ENCODE measurements at regions of chr1 and their contacts with region 1.

Region 1: GRCh38 chr1:30801771-30802198 is 44.2 kb upstream of the LAPTM5 start:
- DNase-seq: peak; percentile 83
- ATAC-seq: peak; percentile 74
- H3K4me3 Mint-ChIP-seq: no peak overlapping the region
- H3K27ac Mint-ChIP-seq: no peak overlapping the region
- H3K4me1 Mint-ChIP-seq: peaks cover 19% of the 10 kb centered on the region
- H3K27me3 Mint-ChIP-seq: peaks cover 14% of the 10 kb centered on the region
- CTCF ChIP-seq: peak; percentile 64

Region 2: GRCh38 chr1:29230553-29231378 is 1571.0 kb before region 1 on chr1 and contains the start of gene MECR:
- CTCF ChIA-PET with region 1: no interaction called
- POLR2A ChIA-PET with region 1: no interaction called
- intact Hi-C with region 1: loop called (anchors 10 kb)
- DNase-seq: peak; percentile 98
- ATAC-seq: peak; percentile 97
- H3K4me3 Mint-ChIP-seq: peak within 1 kb of the TSS; percentile 93
- H3K27ac Mint-ChIP-seq: peak within 1 kb of the TSS; percentile 84
- H3K4me1 Mint-ChIP-seq: peaks cover 18% of the 10 kb centered on the region
- H3K27me3 Mint-ChIP-seq: peaks cover 11% of the 10 kb centered on the region
- CTCF ChIP-seq: no peak
- total RNA-seq, gene MECR: 18.7 and 23.7 TPM in 2 replicates

Region 3: DNA sequence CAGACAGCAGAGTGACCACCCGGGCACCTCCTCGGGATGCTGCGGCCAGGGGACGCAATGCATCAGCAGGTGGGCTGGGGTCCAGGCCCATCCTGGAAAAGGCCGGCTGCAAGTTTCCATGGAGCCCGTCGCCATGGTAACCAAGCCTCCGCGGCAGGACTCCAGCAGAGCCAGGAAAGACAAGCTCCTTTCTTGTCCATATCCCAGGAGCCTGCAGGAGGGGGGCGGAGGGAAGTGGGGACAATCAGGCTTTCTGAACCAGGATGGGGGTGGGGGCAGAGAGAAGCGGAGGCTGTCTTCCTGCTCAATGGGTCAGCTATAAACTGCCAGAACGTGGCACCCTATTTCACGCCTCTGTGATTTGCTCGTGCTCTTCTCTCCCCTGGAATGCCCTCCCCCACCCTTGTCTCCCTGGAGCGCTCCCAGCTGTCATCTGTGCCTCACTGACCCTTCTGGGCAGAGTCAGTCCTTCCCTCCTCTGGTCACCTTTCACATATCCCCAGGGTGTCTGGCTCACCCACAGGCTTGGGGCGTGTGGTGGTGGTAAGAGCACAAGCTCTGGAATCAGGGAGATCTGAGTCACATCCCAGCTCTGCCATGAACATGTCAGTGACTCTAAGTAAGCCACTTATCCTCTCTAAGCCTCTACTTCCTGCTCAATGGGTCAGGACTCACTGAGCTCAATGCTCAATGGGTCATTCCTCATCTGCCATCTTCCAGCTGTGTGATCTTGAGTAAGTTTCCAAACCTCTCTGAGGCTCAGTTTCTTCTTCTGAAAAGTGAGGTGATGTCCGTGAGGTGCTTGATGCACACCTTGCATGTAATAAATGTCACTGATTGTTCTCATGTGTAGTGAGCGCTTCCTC is 14.7 kb after region 1 on chr1:
- CTCF ChIA-PET with region 1: interaction called, 15 read pairs
- POLR2A ChIA-PET with region 1: no interaction called
- intact Hi-C with region 1: no loop called
- DNase-seq: no peak
- ATAC-seq: no peak
- H3K4me3 Mint-ChIP-seq: no peak overlapping the region
- H3K27ac Mint-ChIP-seq: no peak overlapping the region
- H3K4me1 Mint-ChIP-seq: peaks cover 4% of the 10 kb centered on the region
- H3K27me3 Mint-ChIP-seq: peaks cover 42% of the 10 kb centered on the region
- CTCF ChIP-seq: no peak

Region 4: GRCh38 chr1:30881319-30882181 is 79.8 kb after region 1 on chr1:
- CTCF ChIA-PET with region 1: interaction called, 3 read pairs
- POLR2A ChIA-PET with region 1: interaction called, 3 read pairs
- intact Hi-C with region 1: loop called (anchors 1 kb)
- DNase-seq: peak; percentile 63
- ATAC-seq: peak; percentile 90
- H3K4me3 Mint-ChIP-seq: peak overlapping the region; percentile 9
- H3K27ac Mint-ChIP-seq: peak overlapping the region; percentile 60
- H3K4me1 Mint-ChIP-seq: peaks cover 19% of the 10 kb centered on the region
- H3K27me3 Mint-ChIP-seq: peaks cover 38% of the 10 kb centered on the region
- CTCF ChIP-seq: no peak

Region 5: DNA sequence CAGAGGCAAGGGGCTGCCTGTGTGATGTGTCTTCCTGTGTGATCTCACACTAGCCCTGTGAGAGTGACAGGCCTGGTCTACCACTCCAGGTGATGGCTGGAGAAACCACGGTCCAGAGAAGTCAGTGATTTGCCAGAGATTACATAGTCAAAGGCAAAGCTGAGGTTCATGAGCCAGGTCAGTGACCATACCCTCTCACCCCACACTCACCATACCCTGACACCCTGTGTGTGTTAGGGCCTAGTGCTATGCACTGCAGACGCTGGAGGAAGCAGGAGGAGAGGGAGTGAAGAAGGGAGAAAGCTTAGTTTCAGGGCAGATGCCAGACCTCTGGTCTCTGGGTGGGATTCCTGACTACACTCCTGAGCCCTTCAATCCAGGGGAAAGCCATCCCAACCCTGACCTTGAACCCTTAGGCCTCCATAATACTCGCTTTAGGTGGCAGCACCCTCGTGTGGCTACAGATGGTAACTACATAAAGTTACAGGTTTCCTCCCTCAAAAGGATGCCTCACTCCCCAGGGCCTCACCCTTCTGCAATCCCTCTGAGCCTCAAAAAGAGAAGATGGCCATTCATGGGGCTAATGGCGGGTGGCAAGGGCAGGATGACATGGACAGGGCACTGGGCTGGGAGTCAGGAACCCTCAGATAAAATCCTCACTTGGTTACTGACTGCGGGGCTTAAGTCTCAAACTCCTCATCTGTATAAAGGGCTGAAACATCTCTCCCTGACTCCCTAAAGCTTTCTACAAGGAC is 127.5 kb after region 1 on chr1:
- CTCF ChIA-PET with region 1: interaction called, 70 read pairs
- POLR2A ChIA-PET with region 1: no interaction called
- intact Hi-C with region 1: loop called (anchors 1 kb)
- DNase-seq: no peak
- ATAC-seq: peak; percentile 56
- H3K4me3 Mint-ChIP-seq: no peak overlapping the region
- H3K27ac Mint-ChIP-seq: no peak overlapping the region
- H3K4me1 Mint-ChIP-seq: peaks cover 14% of the 10 kb centered on the region
- H3K27me3 Mint-ChIP-seq: no peaks in the 10 kb centered on the region
- CTCF ChIP-seq: peak; percentile 76

Measured in activated B cell treated with CpG ODN at 0.5 μM for 24 hours (primary cell).